ENCODE measurements at regions of chr6 and their contacts with region 1.

Region 1: GRCh38 chr6:11146117-11146826 is 34.7 kb upstream of the ERVFRD-1 start:
- DNase-seq: no peak
- H3K4me3 ChIP-seq: no peak overlapping the region
- H3K27ac ChIP-seq: no peak overlapping the region
- H3K4me1 ChIP-seq: no peaks in the 10 kb centered on the region
- H3K27me3 ChIP-seq: no peaks in the 10 kb centered on the region
- CTCF ChIP-seq: no peak

Region 2: GRCh38 chr6:11202513-11203305 is 56.4 kb after region 1 on chr6:
- intact Hi-C with region 1: no loop called
- DNase-seq: peak in 4 of 5 donors; percentile 61 to 88 (median 74)
- H3K4me3 ChIP-seq: no peak overlapping the region
- H3K27ac ChIP-seq: peak overlapping the region; percentile 59 to 71
- H3K4me1 ChIP-seq: peaks cover 6 to 28% (median 18%) of the 10 kb centered on the region in 3 donors
- H3K27me3 ChIP-seq: no peaks in the 10 kb centered on the region
- CTCF ChIP-seq: no peak

Region 3: DNA sequence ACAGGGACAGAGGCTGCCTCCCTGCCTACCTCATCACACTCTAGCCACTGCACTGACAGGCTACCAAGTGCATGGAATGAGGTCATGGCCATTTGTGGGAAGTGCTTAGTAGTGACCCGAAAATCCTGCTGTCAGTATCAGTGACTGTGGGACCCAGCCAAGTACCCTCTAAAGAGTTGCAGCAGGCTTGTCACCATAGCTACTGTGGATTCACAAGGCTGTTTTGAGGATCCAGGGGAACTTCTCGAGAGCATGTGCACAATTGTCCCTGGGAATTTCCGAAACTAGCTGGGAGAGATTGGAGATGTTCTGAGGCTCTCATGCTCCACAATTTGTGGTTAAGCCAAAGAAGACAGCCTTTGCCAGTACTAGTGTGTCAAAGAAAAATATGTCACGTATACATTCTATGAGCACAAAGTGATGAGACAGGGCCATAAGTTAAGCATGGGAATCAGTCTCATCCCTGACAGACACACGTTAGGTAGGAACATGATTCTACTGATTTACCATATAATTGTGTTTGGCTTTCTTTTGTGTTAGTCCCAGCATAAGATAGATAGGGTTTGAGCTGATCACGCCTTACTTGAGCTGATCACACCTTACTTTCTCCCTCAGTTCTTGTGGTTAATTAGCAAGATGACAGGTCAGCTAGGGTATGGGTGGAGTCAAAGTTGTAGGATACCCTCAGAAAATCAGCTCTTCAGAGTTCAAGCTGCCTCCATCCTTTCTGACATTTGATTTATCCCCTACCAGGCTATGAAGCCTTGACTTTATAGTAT is 348.7 kb after region 1 on chr6:
- intact Hi-C with region 1: loop called (anchors 5 kb)
- DNase-seq: no peak
- H3K4me3 ChIP-seq: no peak overlapping the region
- H3K27ac ChIP-seq: no peak overlapping the region
- H3K4me1 ChIP-seq: peaks cover 0 to 5% (median 2%) of the 10 kb centered on the region in 3 donors
- H3K27me3 ChIP-seq: no peaks in the 10 kb centered on the region
- CTCF ChIP-seq: no peak

Measured in kidney (tissue), 22 donors.